Thyroid gland (tissue), 4 donors: ENCODE measurements at regions of chr9 and their contacts with region 1.

Region 1: DNA sequence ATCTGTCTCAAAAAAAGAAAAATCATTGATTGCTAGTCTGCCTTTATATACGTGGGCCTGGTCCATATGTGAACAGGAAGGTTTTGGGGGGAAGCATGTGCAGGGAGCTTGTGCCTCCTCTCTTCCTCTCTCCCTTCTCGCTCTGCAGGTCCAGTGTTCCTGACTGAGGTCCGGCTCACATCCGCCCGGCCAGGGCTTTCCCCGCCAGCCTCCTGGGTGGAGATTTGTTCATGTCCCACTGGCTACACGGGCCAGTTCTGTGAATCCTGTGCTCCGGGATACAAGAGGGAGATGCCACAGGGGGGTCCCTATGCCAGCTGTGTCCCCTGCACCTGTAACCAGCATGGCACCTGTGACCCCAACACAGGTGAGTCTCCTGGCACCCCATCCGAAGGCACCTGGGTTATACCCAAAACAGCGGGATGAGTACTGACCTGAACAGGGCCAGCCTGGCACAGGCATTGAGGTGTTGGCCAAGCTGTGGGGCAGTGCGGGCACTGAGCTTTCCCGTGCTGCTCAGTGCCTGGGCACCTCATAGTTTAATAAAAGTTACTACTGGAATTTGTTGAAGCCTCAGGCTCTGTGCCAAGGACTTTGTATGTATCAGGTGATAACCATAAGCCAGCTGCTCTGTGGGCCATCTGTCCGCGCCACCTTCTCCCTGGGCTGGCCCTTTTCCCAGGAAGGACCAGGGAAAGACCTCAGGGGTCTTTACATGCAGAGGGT is 39.4 kb upstream of the AIF1L start:
- DNase-seq: no peak
- H3K4me3 ChIP-seq: no peak overlapping the region
- H3K27ac ChIP-seq: no peak overlapping the region
- H3K4me1 ChIP-seq: no peaks in the 10 kb centered on the region
- H3K27me3 ChIP-seq: no peaks in the 10 kb centered on the region
- CTCF ChIP-seq: no peak
- POLR2A ChIP-seq: no peak

Region 2: DNA sequence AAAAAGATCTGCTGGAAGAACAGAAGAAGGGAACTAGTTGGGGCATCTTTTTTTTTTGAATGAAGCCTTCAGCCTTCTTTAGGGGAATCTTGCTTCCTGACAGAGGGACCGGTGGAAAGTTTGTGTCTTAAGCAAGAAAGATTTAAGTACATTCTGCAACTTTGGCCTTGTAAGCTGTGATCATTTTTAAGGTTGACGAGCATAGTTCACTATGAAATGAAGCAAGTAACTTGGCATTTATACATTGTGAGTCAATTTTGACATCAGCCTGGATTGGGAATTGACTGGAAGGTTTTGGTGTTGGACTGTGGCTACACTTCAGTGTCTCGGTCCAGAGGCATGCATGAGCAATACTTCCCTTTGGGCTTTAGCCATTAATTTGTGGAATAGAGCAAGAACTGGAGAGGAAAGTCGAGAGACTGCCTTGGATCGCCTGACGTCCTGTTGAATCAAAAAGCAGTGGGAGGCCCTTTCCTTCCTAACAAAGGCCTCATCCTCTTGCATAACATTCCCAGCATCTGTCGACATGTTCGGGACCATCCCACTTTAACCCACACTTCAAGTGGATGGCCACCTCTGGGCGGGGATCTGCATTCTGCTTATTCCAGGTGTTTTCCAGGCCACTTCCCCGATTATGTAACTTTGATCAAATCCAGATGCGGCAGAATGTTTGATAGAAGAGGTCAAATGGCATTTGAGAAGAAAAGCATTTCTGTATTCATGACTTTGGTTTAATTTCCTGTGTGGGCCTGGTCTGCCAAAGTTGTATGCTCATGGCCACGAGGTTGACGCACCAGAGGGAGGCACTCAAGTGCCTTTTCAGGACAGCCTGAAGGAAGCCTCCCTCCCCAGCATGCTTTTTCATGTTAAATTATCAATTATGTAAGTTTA is 209.4 kb before region 1 on chr9:
- intact Hi-C with region 1: no loop called
- DNase-seq: peak; percentile 40 to 46
- H3K4me3 ChIP-seq: no peak overlapping the region
- H3K27ac ChIP-seq: peak overlapping the region; percentile 72 to 94 (median 75)
- H3K4me1 ChIP-seq: peaks cover 41 to 76% of the 10 kb centered on the region in 2 donors
- H3K27me3 ChIP-seq: no peaks in the 10 kb centered on the region
- CTCF ChIP-seq: no peak
- POLR2A ChIP-seq: peak in 1 of 2 donors; percentile 18

Region 3: GRCh38 chr9:130927338-130927737 is 129.6 kb before region 1 on chr9:
- intact Hi-C with region 1: no loop called
- DNase-seq: peak in 1 of 2 donors; percentile 27
- H3K4me3 ChIP-seq: no peak overlapping the region
- H3K27ac ChIP-seq: no peak overlapping the region
- H3K4me1 ChIP-seq: peaks cover 7 to 16% of the 10 kb centered on the region in 2 donors
- H3K27me3 ChIP-seq: no peaks in the 10 kb centered on the region
- CTCF ChIP-seq: no peak
- POLR2A ChIP-seq: no peak

Region 4: GRCh38 chr9:131125128-131126058 is 68.4 kb after region 1 on chr9 and contains the start of gene NUP214:
- intact Hi-C with region 1: loop called (anchors 5 kb)
- DNase-seq: peak; percentile 99
- H3K4me3 ChIP-seq: peak within 1 kb of the TSS; percentile 62 to 99 (median 67)
- H3K27ac ChIP-seq: peak within 1 kb of the TSS; percentile 69 to 83 (median 73)
- H3K4me1 ChIP-seq: peaks cover 0 to 12% of the 10 kb centered on the region in 2 donors
- H3K27me3 ChIP-seq: no peaks in the 10 kb centered on the region
- CTCF ChIP-seq: peak in 1 of 6 experiments; percentile 33
- POLR2A ChIP-seq: peak; percentile 67 to 88
- total RNA-seq, gene NUP214: 27.3 to 59.2 (median 46.6) TPM